Activated CD4-positive, alpha-beta T cell treated with anti-CD3 and anti-CD28 coated beads for 36 hours (primary cell): ENCODE measurements at regions of chr5 and their contacts with region 1.

Region 1: DNA sequence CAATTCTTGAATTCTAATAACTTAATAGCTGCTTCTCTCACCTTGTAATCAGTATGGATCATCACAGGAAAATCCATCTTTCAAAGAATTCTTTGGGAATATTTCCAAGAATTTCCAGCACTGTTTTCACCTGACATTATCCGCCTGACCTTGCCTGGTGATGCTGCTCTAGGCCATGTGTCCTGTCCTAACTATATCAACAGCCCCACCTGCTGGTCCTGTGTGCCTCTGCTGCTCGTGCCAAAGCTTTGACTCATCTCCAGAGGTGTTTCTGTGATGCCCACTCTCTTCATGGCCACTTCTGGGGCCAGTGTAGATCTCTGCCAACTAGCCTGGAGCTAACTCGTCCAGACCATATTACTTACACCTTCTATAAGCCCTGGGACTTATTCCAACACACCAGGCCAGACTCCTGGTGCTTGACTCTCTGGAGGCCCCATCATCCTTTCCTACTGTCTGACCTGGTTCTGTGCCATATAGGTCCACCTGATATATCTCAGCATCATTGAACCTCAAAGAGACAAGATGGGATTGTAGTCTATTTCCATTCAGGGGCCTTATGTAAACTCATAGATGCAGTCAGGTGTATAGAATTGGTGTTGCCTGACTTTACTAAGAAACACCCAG is 67.5 kb upstream of the CKMT2 start:
- DNase-seq: peak; percentile 84
- ATAC-seq: peak; percentile 87
- H3K4me3 Mint-ChIP-seq: no peak overlapping the region
- H3K27ac Mint-ChIP-seq: no peak overlapping the region
- H3K4me1 Mint-ChIP-seq: peaks cover 16% of the 10 kb centered on the region
- H3K27me3 Mint-ChIP-seq: no peaks in the 10 kb centered on the region

Region 2: GRCh38 chr5:80686757-80687156 is 478.8 kb before region 1 on chr5:
- CTCF ChIA-PET with region 1: interaction called, 4 read pairs
- POLR2A ChIA-PET with region 1: no interaction called
- intact Hi-C with region 1: loop called (anchors 1 to 5 kb)
- DNase-seq: no peak
- ATAC-seq: no peak
- H3K4me3 Mint-ChIP-seq: no peak overlapping the region
- H3K27ac Mint-ChIP-seq: no peak overlapping the region
- H3K4me1 Mint-ChIP-seq: peaks cover 15% of the 10 kb centered on the region
- H3K27me3 Mint-ChIP-seq: no peaks in the 10 kb centered on the region

Region 3: GRCh38 chr5:80935811-80936385 is 229.7 kb before region 1 on chr5:
- CTCF ChIA-PET with region 1: interaction called, 3 read pairs
- POLR2A ChIA-PET with region 1: no interaction called
- intact Hi-C with region 1: loop called in 1 of 2 experiments (anchors 2 kb)
- DNase-seq: no peak
- ATAC-seq: no peak
- H3K4me3 Mint-ChIP-seq: no peak overlapping the region
- H3K27ac Mint-ChIP-seq: no peak overlapping the region
- H3K4me1 Mint-ChIP-seq: peaks cover 6% of the 10 kb centered on the region
- H3K27me3 Mint-ChIP-seq: no peaks in the 10 kb centered on the region